Common myeloid progenitor, CD34-positive (primary cell): ENCODE measurements at regions of chr1 and their contacts with region 1.

Region 1: GRCh38 chr1:208093754-208094719 is 150.1 kb downstream of the PLXNA2 start:
- DNase-seq: peak; percentile 63 to 72 (median 70)
- H3K4me3 ChIP-seq: no peak overlapping the region
- H3K27ac ChIP-seq: no peak overlapping the region
- H3K4me1 ChIP-seq: no peaks in the 10 kb centered on the region
- H3K27me3 ChIP-seq: no peaks in the 10 kb centered on the region

Region 2: GRCh38 chr1:208029381-208030287 is 64.4 kb before region 1 on chr1:
- CTCF ChIA-PET with region 1: interaction called, 204 read pairs
- POLR2A ChIA-PET with region 1: no interaction called
- DNase-seq: peak in 1 of 3 donors; percentile 16
- H3K4me3 ChIP-seq: no peak overlapping the region
- H3K27ac ChIP-seq: no peak overlapping the region
- H3K4me1 ChIP-seq: peaks cover 0 to 10% (median 6%) of the 10 kb centered on the region in 4 experiments
- H3K27me3 ChIP-seq: peaks cover 0 to 2% (median 0%) of the 10 kb centered on the region in 5 experiments

Region 3: GRCh38 chr1:208083016-208083714 is 10.9 kb before region 1 on chr1:
- CTCF ChIA-PET with region 1: interaction called, 11 read pairs
- POLR2A ChIA-PET with region 1: no interaction called
- DNase-seq: peak in 2 of 3 donors; percentile 16 to 21
- H3K4me3 ChIP-seq: no peak overlapping the region
- H3K27ac ChIP-seq: no peak overlapping the region
- H3K4me1 ChIP-seq: peaks cover 0 to 19% (median 16%) of the 10 kb centered on the region in 4 experiments
- H3K27me3 ChIP-seq: no peaks in the 10 kb centered on the region

Region 4: GRCh38 chr1:208110296-208110695 is 16.3 kb after region 1 on chr1:
- CTCF ChIA-PET with region 1: interaction called, 26 read pairs
- POLR2A ChIA-PET with region 1: no interaction called
- DNase-seq: no peak
- H3K4me3 ChIP-seq: no peak overlapping the region
- H3K27ac ChIP-seq: no peak overlapping the region
- H3K4me1 ChIP-seq: no peaks in the 10 kb centered on the region
- H3K27me3 ChIP-seq: peaks cover 0 to 14% (median 0%) of the 10 kb centered on the region in 5 experiments

Region 5: GRCh38 chr1:208225954-208226937 is 132.2 kb after region 1 on chr1:
- CTCF ChIA-PET with region 1: no interaction called
- POLR2A ChIA-PET with region 1: no interaction called
- DNase-seq: no peak
- H3K4me3 ChIP-seq: no peak overlapping the region
- H3K27ac ChIP-seq: no peak overlapping the region
- H3K4me1 ChIP-seq: peaks cover 3 to 20% (median 11%) of the 10 kb centered on the region in 4 experiments
- H3K27me3 ChIP-seq: no peaks in the 10 kb centered on the region